Common myeloid progenitor, CD34-positive (primary cell): ENCODE measurements at regions of chr14 and their contacts with region 1.

Region 1: GRCh38 chr14:22438742-22439141 is 150.3 kb downstream of the DAD1 start:
- DNase-seq: peak in 2 of 3 donors; percentile 68 to 70
- H3K4me3 ChIP-seq: peak overlapping the region in 2 of 7 experiments; percentile 12 to 28
- H3K27ac ChIP-seq: no peak overlapping the region
- H3K4me1 ChIP-seq: peaks cover 12 to 51% (median 32%) of the 10 kb centered on the region in 4 experiments
- H3K27me3 ChIP-seq: no peaks in the 10 kb centered on the region

Region 2: GRCh38 chr14:22375321-22375930 is 63.3 kb before region 1 on chr14:
- CTCF ChIA-PET with region 1: no interaction called
- POLR2A ChIA-PET with region 1: no interaction called
- DNase-seq: peak; percentile 61 to 84 (median 82)
- H3K4me3 ChIP-seq: no peak overlapping the region
- H3K27ac ChIP-seq: no peak overlapping the region
- H3K4me1 ChIP-seq: no peaks in the 10 kb centered on the region
- H3K27me3 ChIP-seq: peaks cover 0 to 2% (median 0%) of the 10 kb centered on the region in 5 experiments

Region 3: DNA sequence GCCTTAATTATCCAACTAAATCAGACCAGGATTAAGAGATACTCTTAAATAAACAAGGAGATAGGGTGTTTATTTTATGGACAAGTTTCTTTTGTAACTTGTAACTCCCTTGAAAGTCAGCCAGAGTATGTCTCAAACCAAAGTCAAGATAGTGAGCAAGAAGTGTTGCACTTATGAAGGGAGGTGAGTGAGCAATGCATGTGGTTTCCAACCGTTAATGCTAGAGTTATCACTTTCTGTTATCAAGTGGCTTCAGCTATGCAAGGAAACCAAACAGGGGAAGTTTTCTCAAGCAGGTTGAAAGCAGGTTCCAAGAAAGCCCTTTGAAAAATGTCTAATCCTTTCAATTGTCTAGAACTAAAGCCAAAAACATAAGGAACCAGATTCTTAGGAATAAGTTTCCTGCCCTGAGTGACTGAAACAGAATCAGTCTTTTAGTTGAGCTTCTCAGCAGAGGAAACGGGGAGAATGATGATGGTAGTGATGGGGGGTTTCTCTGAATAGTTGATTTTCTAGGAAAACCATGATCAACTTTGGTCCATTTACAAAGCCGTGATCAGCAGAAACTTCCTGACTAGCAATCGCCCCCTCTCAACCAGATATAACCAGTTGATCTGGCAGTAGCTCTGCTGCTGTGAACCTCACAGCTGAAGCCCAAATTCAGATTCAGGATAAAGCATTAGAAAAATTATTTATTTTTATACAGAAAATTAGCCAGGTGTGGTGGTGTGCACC is 21.9 kb after region 1 on chr14:
- CTCF ChIA-PET with region 1: interaction called, 62 read pairs
- POLR2A ChIA-PET with region 1: interaction called, 3 read pairs
- DNase-seq: peak; percentile 74 to 97 (median 93)
- H3K4me3 ChIP-seq: peak overlapping the region in 3 of 7 experiments; percentile 27 to 56 (median 30)
- H3K27ac ChIP-seq: peak overlapping the region; percentile 34 to 75
- H3K4me1 ChIP-seq: peaks cover 22 to 78% (median 59%) of the 10 kb centered on the region in 4 experiments
- H3K27me3 ChIP-seq: no peaks in the 10 kb centered on the region

Region 4: GRCh38 chr14:22466491-22466890 is 27.7 kb after region 1 on chr14:
- CTCF ChIA-PET with region 1: interaction called, 75 read pairs
- POLR2A ChIA-PET with region 1: no interaction called
- DNase-seq: no peak
- H3K4me3 ChIP-seq: no peak overlapping the region
- H3K27ac ChIP-seq: no peak overlapping the region
- H3K4me1 ChIP-seq: peaks cover 10 to 54% (median 26%) of the 10 kb centered on the region in 4 experiments
- H3K27me3 ChIP-seq: no peaks in the 10 kb centered on the region